PC-3 (cell line): ENCODE measurements at regions of chr5 and their contacts with region 1.

Region 1: GRCh38 chr5:140244525-140245025 is 58.3 kb downstream of the PFDN1 start:
- DNase-seq: peak; percentile 93
- ATAC-seq: peak; percentile 41
- H3K4me3 ChIP-seq: no peak overlapping the region
- H3K27ac ChIP-seq: peak overlapping the region; percentile 90
- H3K4me1 ChIP-seq: peaks cover 55% of the 10 kb centered on the region
- H3K27me3 ChIP-seq: no peaks in the 10 kb centered on the region
- CTCF ChIP-seq: peak; percentile 88

Region 2: GRCh38 chr5:140174465-140175366 is 69.9 kb before region 1 on chr5 and contains the start of gene CYSTM1:
- CTCF ChIA-PET with region 1: interaction called, 3 read pairs
- POLR2A ChIA-PET with region 1: no interaction called
- intact Hi-C with region 1: loop called (anchors 5 kb)
- DNase-seq: peak; percentile 97
- ATAC-seq: peak; percentile 86
- H3K4me3 ChIP-seq: peak within 1 kb of the TSS; percentile 85
- H3K27ac ChIP-seq: peak within 1 kb of the TSS; percentile 59
- H3K4me1 ChIP-seq: peaks cover 29% of the 10 kb centered on the region
- H3K27me3 ChIP-seq: no peaks in the 10 kb centered on the region
- CTCF ChIP-seq: no peak
- total RNA-seq, gene CYSTM1: 24.3 and 43.3 TPM in 2 replicates

Region 3: GRCh38 chr5:140295414-140295813 is 50.8 kb after region 1 on chr5:
- CTCF ChIA-PET with region 1: interaction called, 8 read pairs
- POLR2A ChIA-PET with region 1: no interaction called
- intact Hi-C with region 1: loop called (anchors 2 kb)
- DNase-seq: peak; percentile 96
- ATAC-seq: peak; percentile 52
- H3K4me3 ChIP-seq: no peak overlapping the region
- H3K27ac ChIP-seq: peak overlapping the region; percentile 7; the same call in 1 of the 2 replicates
- H3K4me1 ChIP-seq: peaks cover 82% of the 10 kb centered on the region
- H3K27me3 ChIP-seq: no peaks in the 10 kb centered on the region
- CTCF ChIP-seq: no peak

Region 4: GRCh38 chr5:140351609-140352334 is 107.2 kb after region 1 on chr5:
- CTCF ChIA-PET with region 1: interaction called, 95 read pairs
- POLR2A ChIA-PET with region 1: interaction called, 14 read pairs
- intact Hi-C with region 1: loop called (anchors 1 kb)
- DNase-seq: peak; percentile 94
- ATAC-seq: peak; percentile 59
- H3K4me3 ChIP-seq: no peak overlapping the region
- H3K27ac ChIP-seq: no peak overlapping the region
- H3K4me1 ChIP-seq: peaks cover 30% of the 10 kb centered on the region
- H3K27me3 ChIP-seq: no peaks in the 10 kb centered on the region
- CTCF ChIP-seq: peak; percentile 93

Region 5: DNA sequence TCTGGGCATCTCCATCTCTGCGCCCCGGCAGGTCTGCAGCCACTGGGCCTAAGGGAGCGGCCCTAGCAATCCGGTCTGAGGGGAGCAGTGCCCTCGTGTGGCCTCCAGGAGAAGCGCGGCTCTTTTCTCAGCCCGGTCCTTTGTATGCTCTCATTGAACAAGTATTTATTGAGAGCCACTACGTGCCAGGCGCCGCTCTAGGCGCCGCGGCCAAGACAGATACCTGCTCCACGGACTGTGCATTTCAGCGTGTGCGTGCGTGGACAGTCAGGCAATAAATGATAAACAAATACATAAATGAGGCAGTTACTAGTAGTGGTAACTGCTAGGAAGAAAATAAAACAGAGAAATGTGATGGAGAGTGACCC is 113.1 kb after region 1 on chr5:
- CTCF ChIA-PET with region 1: interaction called, 14 read pairs
- POLR2A ChIA-PET with region 1: interaction called, 3 read pairs
- intact Hi-C with region 1: loop called (anchors 1 kb)
- DNase-seq: peak; percentile 93
- ATAC-seq: peak; percentile 96
- H3K4me3 ChIP-seq: peak overlapping the region; percentile 47; the same call in 1 of the 2 replicates
- H3K27ac ChIP-seq: no peak overlapping the region
- H3K4me1 ChIP-seq: no peaks in the 10 kb centered on the region; the same call in 1 of the 2 replicates
- H3K27me3 ChIP-seq: no peaks in the 10 kb centered on the region
- CTCF ChIP-seq: peak; percentile 94